Calu3 (cell line): ENCODE measurements at regions of chr18 and their contacts with region 1.

Region 1: GRCh38 chr18:21997207-21998143 is 171.9 kb upstream of the GATA6 start:
- DNase-seq: peak; percentile 30
- H3K4me3 Mint-ChIP-seq: no peak overlapping the region
- H3K27ac Mint-ChIP-seq: no peak overlapping the region
- H3K4me1 Mint-ChIP-seq: peaks cover 26% of the 10 kb centered on the region
- H3K27me3 Mint-ChIP-seq: no peaks in the 10 kb centered on the region
- CTCF ChIP-seq: peak; percentile 76

Region 2: DNA sequence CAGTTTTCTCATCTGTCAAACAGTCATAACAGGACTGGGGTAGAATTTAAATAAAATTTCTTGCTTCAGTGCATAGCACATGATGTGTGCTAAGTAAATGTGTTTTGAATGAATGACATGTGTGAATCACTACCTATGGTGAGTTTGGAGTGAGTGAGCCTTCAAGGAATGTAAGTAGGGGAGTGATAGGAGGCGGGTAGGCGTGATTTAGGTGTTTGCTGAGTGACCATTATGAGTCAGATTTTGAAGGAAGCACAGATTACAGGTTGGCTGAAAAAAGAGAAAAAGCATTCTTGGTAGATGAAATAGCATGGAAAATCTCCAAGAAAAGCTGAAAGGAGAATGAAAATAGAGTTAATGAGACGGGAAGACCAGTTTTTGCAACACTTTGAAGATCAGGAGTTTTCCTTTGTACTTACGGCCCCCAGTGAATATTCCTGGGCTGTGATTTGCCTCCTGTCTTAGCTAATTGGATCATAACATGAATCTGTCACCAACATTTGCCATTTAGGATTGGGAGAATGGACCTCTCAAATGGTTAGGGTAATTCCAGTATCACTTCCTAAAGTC is 35.0 kb after region 1 on chr18:
- CTCF ChIA-PET with region 1: no interaction called
- intact Hi-C with region 1: loop called (anchors 5 kb)
- DNase-seq: peak; percentile 70
- H3K4me3 Mint-ChIP-seq: peak overlapping the region; percentile 35
- H3K27ac Mint-ChIP-seq: peak overlapping the region; percentile 93
- H3K4me1 Mint-ChIP-seq: peaks cover 23% of the 10 kb centered on the region
- H3K27me3 Mint-ChIP-seq: no peaks in the 10 kb centered on the region
- CTCF ChIP-seq: no peak

Region 3: GRCh38 chr18:22108674-22109073 is 111.2 kb after region 1 on chr18:
- CTCF ChIA-PET with region 1: interaction called, 5 read pairs
- intact Hi-C with region 1: loop called (anchors 10 kb)
- DNase-seq: peak; percentile 31
- H3K4me3 Mint-ChIP-seq: no peak overlapping the region
- H3K27ac Mint-ChIP-seq: no peak overlapping the region
- H3K4me1 Mint-ChIP-seq: peaks cover 22% of the 10 kb centered on the region
- H3K27me3 Mint-ChIP-seq: no peaks in the 10 kb centered on the region
- CTCF ChIP-seq: no peak

Region 4: GRCh38 chr18:22169007-22169864 is 171.8 kb after region 1 on chr18 and contains the start of gene GATA6:
- CTCF ChIA-PET with region 1: interaction called, 7 read pairs
- intact Hi-C with region 1: loop called (anchors 5 kb)
- DNase-seq: peak; percentile 94
- H3K4me3 Mint-ChIP-seq: peak within 1 kb of the TSS; percentile 98
- H3K27ac Mint-ChIP-seq: peak within 1 kb of the TSS; percentile 94
- H3K4me1 Mint-ChIP-seq: peaks cover 8% of the 10 kb centered on the region
- H3K27me3 Mint-ChIP-seq: peaks cover 23% of the 10 kb centered on the region
- CTCF ChIP-seq: no peak
- total RNA-seq, gene GATA6: 54.6 and 58.4 TPM in 2 replicates

Region 5: GRCh38 chr18:22214731-22215528 is 217.5 kb after region 1 on chr18:
- CTCF ChIA-PET with region 1: interaction called, 11 read pairs
- intact Hi-C with region 1: no loop called
- DNase-seq: no peak
- H3K4me3 Mint-ChIP-seq: no peak overlapping the region
- H3K27ac Mint-ChIP-seq: peak overlapping the region; percentile 39
- H3K4me1 Mint-ChIP-seq: peaks cover 33% of the 10 kb centered on the region
- H3K27me3 Mint-ChIP-seq: no peaks in the 10 kb centered on the region
- CTCF ChIP-seq: no peak